ENCODE measurements at regions of chr2 and their contacts with region 1.

Region 1: GRCh38 chr2:88838165-88838635 is 146.7 kb downstream of the RPIA start:
- DNase-seq: peak; percentile 100
- H3K4me3 ChIP-seq: peak overlapping the region; percentile 66
- H3K27ac ChIP-seq: peak overlapping the region; percentile 100
- H3K4me1 ChIP-seq: peaks cover 99% of the 10 kb centered on the region
- CTCF ChIP-seq: no peak

Region 2: DNA sequence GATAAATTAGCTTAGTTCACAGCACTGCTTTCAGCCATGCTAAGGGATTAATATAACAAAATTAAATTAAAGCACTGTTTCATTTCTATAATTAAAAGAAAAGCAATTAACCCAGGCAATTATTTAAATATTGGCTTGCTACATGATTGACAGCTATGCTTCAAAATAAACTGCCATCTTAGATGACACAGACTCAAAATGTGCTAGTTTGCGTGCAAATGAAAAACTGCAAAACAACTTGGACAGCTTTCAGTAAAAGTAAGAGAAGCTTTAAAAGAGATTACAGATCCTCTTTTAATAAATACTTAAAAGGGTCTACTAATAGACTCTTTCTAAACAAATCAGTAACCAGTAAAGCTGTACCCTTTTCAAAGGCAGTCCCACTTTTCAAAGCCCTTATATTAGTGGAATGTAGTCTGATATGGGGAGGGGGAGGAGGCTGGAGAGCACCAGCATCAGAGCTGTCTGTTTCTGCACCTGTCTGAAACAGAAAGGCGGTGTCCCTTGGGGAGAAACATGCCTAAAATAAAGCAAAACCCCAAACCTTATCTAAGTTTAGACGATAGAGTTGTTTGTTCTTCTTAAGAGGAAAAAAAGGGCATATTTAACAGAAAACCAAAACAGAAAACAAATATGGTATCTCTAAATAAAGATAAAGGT is 231.7 kb before region 1 on chr2:
- CTCF ChIA-PET with region 1: no interaction called
- POLR2A ChIA-PET with region 1: interaction called, 12 read pairs
- intact Hi-C with region 1: no loop called
- DNase-seq: peak; percentile 92
- H3K4me3 ChIP-seq: peak overlapping the region; percentile 45
- H3K27ac ChIP-seq: peak overlapping the region; percentile 99
- H3K4me1 ChIP-seq: peaks cover 99% of the 10 kb centered on the region
- CTCF ChIP-seq: no peak

Region 3: DNA sequence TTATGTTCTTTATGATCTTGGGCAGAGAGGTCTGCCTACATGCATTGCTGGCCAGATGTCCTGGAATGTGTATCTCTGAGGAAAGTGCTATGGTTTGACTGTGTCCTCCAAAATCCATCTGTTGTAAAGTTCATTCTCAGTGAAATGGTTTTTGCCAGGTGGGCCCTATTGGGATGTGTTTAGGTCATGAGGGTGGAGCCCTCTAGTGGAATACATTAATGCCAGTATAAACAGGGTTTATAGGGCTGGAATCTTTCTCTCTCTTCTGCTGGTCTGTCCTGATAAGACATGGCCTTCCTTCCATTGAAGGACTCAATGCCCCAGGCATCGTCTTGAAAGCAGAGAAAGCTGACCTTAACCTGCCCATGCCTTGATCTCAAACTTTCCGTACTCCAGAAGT is 111.8 kb after region 1 on chr2:
- CTCF ChIA-PET with region 1: no interaction called
- POLR2A ChIA-PET with region 1: no interaction called
- intact Hi-C with region 1: no loop called
- DNase-seq: no peak
- H3K4me3 ChIP-seq: no peak overlapping the region
- H3K27ac ChIP-seq: no peak overlapping the region
- H3K4me1 ChIP-seq: no peaks in the 10 kb centered on the region
- CTCF ChIP-seq: no peak

Measured in OCI-LY7 (cell line).